ENCODE measurements at regions of chr4 and their contacts with region 1.

Region 1: GRCh38 chr4:54322818-54323417 is 93.8 kb downstream of the PDGFRA start:
- DNase-seq: peak; percentile 51
- ATAC-seq: peak; percentile 70

Region 2: GRCh38 chr4:54440394-54441136 is 117.6 kb after region 1 on chr4:
- intact Hi-C with region 1: loop called (anchors 2 kb)
- DNase-seq: no peak
- ATAC-seq: peak; percentile 72

Region 3: GRCh38 chr4:54961357-54961975 is 638.5 kb after region 1 on chr4:
- intact Hi-C with region 1: loop called (anchors 5 kb)
- DNase-seq: no peak
- ATAC-seq: peak; percentile 56